ENCODE measurements at regions of chr9 and their contacts with region 1.

Region 1: DNA sequence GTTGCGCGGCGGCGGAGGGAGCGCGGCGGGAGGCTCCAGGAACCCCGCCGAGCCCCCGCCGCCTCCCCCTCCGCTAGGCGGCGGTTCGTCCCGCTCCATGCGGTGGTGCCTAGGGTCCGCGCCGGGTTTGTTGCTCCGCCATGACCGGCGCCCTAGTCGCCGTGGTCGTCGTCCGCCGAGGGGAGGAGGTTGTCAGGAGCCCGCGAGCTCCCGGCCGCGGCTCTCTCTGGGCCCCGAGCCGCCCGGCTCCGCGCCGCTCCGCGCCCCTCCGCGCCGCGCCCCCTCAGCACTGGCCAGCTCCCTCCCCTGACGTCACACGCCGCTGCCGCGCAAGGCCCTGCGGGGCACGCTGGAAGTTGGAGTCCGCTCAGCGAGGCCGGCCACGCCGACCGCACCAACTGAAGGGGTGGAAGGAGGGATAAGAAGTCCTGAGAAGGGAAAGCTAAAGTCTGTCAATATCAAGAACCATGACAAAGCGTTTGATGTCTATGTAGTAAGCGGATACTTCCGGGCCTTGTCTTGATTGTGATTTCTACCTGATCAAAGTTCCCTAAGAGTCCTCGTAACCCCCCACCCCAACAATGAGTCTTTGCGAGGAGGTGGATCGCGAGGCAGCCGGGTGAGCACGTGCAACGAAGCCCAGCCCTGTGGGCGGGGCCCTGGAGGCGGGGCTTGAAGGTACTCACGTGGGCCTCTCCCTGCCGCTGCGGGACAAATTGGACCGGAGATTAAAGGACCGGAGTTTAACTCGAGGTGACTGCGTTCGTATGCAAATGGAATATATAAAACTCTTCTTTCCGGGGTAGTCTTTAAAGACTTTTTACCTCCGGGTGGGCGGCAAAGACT is at the start of gene NR6A1:
- H3K4me3 ChIP-seq: peak within 1 kb of the TSS; percentile 96
- H3K27ac ChIP-seq: peak within 1 kb of the TSS; percentile 91
- H3K4me1 ChIP-seq: peaks cover 16% of the 10 kb centered on the region; the same call in 1 of the 2 replicates
- CTCF ChIP-seq: peak; percentile 51; the same call in 1 of the 2 replicates

Region 2: DNA sequence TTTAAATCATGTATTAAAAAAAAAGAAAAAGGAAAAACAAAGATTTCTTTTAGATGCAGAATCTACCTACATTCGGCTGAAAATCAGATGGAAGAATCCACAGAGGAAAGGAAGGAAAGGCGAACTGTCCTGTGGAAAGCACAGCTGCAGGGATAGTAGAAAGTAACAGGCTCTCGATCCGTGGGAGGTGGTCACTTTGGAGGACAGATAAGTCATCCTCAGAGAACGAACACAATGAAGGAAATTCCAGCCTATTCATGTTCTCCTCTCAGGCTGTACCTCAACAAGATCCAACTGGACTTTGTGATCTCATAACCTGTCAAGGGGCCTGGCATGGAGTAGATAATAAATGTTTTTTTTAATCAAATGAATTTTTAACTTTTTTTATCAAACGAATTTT is 73.0 kb before region 1 on chr9:
- CTCF ChIA-PET with region 1: no interaction called
- POLR2A ChIA-PET with region 1: no interaction called
- H3K4me3 ChIP-seq: no peak overlapping the region
- H3K27ac ChIP-seq: no peak overlapping the region
- H3K4me1 ChIP-seq: peaks cover 22% of the 10 kb centered on the region
- CTCF ChIP-seq: no peak

Region 3: DNA sequence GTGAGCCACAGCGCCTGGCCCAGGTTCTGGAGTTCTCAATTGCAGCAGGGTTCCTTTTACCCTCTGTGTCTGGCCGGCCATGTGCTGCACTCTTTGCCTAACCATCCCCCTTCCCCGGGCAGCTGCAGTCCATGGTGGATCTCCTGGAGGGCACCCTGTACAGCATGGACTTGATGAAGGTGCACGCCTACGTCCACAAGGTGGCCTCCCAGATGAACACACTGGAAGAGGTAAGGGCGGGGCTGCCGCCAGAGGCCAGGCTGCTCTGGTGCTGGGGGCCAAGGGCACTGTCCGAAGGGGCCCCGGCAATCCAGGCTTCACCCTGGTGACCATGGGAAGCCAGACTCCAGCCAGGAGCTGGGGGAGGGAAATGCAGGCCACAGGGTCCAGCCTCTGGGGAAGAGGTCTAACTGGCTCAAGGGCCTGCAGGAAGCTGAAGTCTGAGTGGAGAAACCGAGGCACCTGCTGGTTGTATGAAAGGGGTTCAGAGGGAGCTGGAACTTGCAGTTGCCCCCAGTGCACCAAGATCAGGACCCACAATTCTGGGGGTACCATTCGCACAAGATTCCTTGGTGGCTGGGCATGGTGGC is 23.8 kb after region 1 on chr9:
- CTCF ChIA-PET with region 1: interaction called, 60 read pairs
- POLR2A ChIA-PET with region 1: no interaction called
- H3K4me3 ChIP-seq: no peak overlapping the region
- H3K27ac ChIP-seq: no peak overlapping the region
- H3K4me1 ChIP-seq: no peaks in the 10 kb centered on the region
- CTCF ChIP-seq: peak; percentile 44; the same call in 1 of the 2 replicates

Region 4: GRCh38 chr9:124818431-124819281 is 47.4 kb after region 1 on chr9:
- CTCF ChIA-PET with region 1: interaction called, 97 read pairs
- POLR2A ChIA-PET with region 1: interaction called, 6 read pairs
- H3K4me3 ChIP-seq: no peak overlapping the region
- H3K27ac ChIP-seq: no peak overlapping the region
- H3K4me1 ChIP-seq: no peaks in the 10 kb centered on the region
- CTCF ChIP-seq: no peak

Region 5: GRCh38 chr9:124868511-124869465 is 97.5 kb after region 1 on chr9:
- CTCF ChIA-PET with region 1: interaction called, 6 read pairs
- POLR2A ChIA-PET with region 1: interaction called, 13 read pairs
- H3K4me3 ChIP-seq: peak overlapping the region; percentile 91
- H3K27ac ChIP-seq: peak overlapping the region; percentile 78
- H3K4me1 ChIP-seq: peaks cover 4% of the 10 kb centered on the region; the same call in 1 of the 2 replicates
- CTCF ChIP-seq: 0 out of 2 replicates have a peak, but pooled peaks have one; percentile 65

Region 6: DNA sequence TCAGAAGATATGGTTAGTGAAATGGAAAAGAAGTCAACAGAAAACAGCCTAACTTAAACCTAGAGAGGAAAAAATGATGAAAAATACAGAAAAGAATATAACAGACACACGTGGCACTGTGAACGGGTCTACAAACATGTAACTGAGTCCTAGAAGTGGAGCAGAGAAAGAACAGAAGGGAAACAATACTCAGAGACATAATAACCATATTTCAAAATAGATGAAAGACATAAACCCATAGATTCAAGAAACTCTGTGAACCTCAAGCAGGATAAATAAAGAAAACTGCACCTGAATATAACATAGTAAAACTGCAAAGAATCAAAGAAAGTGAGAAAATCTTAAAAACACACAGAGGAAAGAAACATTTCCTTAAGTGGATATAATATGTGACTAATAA is 237.4 kb after region 1 on chr9:
- CTCF ChIA-PET with region 1: no interaction called
- POLR2A ChIA-PET with region 1: no interaction called
- H3K4me3 ChIP-seq: no peak overlapping the region
- H3K27ac ChIP-seq: no peak overlapping the region
- H3K4me1 ChIP-seq: no peaks in the 10 kb centered on the region
- CTCF ChIP-seq: no peak